ENCODE measurements at regions of chrX and their contacts with region 1.

Region 1: GRCh38 chrX:75603833-75604232 is 81.0 kb upstream of the ZDHHC15 start:
- DNase-seq: peak; percentile 7
- ATAC-seq: no peak
- H3K4me3 ChIP-seq: no peak overlapping the region
- H3K27ac ChIP-seq: no peak overlapping the region
- H3K4me1 ChIP-seq: no peaks in the 10 kb centered on the region
- H3K27me3 ChIP-seq: no peaks in the 10 kb centered on the region
- CTCF ChIP-seq: peak; percentile 36
- EP300 ChIP-seq: no peak
- POLR2A ChIP-seq: no peak
- RAD21 ChIP-seq: no peak

Region 2: GRCh38 chrX:74492720-74493201 is 1111.1 kb before region 1 on chrX:
- CTCF ChIA-PET with region 1: no interaction called
- POLR2A ChIA-PET with region 1: no interaction called
- in situ Hi-C with region 1: no loop called
- intact Hi-C with region 1: loop called (anchors 5 kb)
- DNase-seq: no peak
- ATAC-seq: peak; percentile 75
- H3K4me3 ChIP-seq: no peak overlapping the region
- H3K27ac ChIP-seq: no peak overlapping the region
- H3K4me1 ChIP-seq: no peaks in the 10 kb centered on the region
- H3K27me3 ChIP-seq: no peaks in the 10 kb centered on the region
- CTCF ChIP-seq: peak; percentile 34
- EP300 ChIP-seq: no peak
- POLR2A ChIP-seq: no peak
- RAD21 ChIP-seq: no peak

Region 3: DNA sequence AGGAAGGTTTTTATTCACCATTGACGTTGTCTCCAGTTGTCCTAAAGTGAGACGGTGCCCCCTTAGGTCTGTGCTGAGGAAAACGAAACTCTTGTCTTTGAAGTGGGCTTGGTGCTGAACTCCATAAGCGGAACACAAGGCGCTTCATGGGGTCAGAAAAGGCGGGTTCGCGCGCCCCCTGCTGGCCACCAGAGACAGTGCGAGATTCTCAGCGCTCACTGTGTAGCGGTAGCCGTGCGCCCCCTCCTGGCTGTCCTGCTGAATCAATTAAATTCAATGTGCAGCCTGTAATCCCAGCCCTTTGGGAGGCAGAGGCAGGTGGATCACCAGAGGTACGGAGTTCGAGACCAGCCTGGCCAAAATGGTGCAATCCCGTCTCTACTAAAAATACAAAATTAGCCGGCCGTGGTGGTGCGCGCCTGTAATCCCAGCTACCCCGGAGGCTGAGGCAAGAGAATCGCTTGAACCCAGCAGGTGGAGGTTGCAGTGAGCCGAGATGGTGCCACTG is 1053.5 kb before region 1 on chrX:
- CTCF ChIA-PET with region 1: no interaction called
- POLR2A ChIA-PET with region 1: no interaction called
- in situ Hi-C with region 1: no loop called
- intact Hi-C with region 1: loop called (anchors 5 kb)
- DNase-seq: peak; percentile 53
- ATAC-seq: peak; percentile 92
- H3K4me3 ChIP-seq: no peak overlapping the region
- H3K27ac ChIP-seq: no peak overlapping the region
- H3K4me1 ChIP-seq: no peaks in the 10 kb centered on the region
- H3K27me3 ChIP-seq: no peaks in the 10 kb centered on the region
- CTCF ChIP-seq: peak; percentile 97
- EP300 ChIP-seq: no peak
- POLR2A ChIP-seq: no peak
- RAD21 ChIP-seq: peak; percentile 79

Region 4: DNA sequence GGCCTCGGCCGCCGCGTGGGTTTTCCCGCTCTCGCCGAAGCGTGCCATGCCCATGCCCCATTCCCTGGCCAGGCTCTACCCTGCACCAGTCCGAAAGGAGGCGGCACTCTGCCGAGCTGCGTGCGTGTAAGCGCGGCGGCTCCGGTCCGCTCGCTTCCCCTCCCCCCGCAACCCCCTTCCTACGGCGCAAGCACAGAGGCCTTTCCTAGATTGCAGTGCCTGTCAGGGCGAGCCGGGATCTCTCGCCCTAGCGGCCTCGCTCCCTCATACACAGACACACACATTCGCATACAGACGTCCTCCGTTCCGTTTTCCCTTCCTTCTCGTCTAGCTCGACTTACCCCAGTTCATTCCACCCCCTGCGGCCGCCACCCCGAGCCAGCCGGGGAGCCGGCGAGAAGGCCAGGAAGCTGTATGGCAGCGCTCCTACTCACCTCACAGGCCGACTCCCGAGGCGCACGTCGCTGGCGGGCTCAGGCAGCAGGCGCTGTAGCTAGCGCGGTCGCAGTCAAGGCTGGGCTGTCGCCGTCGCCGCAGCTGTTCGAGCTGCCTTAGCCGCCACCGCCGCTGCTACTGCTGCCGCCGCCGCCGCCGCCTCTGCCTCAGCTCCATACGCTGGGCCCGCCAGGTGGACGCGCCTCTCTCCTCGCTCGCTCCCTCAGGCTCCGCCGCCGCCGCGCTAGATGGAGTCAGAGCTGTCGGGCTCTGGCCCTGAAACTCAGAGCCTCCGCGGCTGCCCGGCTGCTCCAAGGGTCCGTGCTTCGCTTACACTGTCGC is 679.2 kb before region 1 on chrX:
- CTCF ChIA-PET with region 1: no interaction called
- POLR2A ChIA-PET with region 1: no interaction called
- in situ Hi-C with region 1: no loop called
- intact Hi-C with region 1: loop called (anchors 10 kb)
- DNase-seq: no peak
- ATAC-seq: peak; percentile 93
- H3K4me3 ChIP-seq: peak overlapping the region; percentile 26 to 60 (median 41); a peak in 5 of 6 replicates
- H3K27ac ChIP-seq: no peak overlapping the region
- H3K4me1 ChIP-seq: no peaks in the 10 kb centered on the region
- H3K27me3 ChIP-seq: no peaks in the 10 kb centered on the region
- CTCF ChIP-seq: no peak
- EP300 ChIP-seq: no peak
- POLR2A ChIP-seq: no peak
- RAD21 ChIP-seq: no peak

Region 5: GRCh38 chrX:75038925-75039324 is 564.9 kb before region 1 on chrX:
- CTCF ChIA-PET with region 1: no interaction called
- POLR2A ChIA-PET with region 1: no interaction called
- in situ Hi-C with region 1: loop called (anchors 25 kb)
- intact Hi-C with region 1: loop called (anchors 5 kb)
- DNase-seq: peak; percentile 10
- ATAC-seq: peak; percentile 71
- H3K4me3 ChIP-seq: no peak overlapping the region
- H3K27ac ChIP-seq: no peak overlapping the region
- H3K4me1 ChIP-seq: no peaks in the 10 kb centered on the region
- H3K27me3 ChIP-seq: no peaks in the 10 kb centered on the region
- CTCF ChIP-seq: peak; percentile 66
- EP300 ChIP-seq: no peak
- POLR2A ChIP-seq: no peak
- RAD21 ChIP-seq: no peak

Region 6: DNA sequence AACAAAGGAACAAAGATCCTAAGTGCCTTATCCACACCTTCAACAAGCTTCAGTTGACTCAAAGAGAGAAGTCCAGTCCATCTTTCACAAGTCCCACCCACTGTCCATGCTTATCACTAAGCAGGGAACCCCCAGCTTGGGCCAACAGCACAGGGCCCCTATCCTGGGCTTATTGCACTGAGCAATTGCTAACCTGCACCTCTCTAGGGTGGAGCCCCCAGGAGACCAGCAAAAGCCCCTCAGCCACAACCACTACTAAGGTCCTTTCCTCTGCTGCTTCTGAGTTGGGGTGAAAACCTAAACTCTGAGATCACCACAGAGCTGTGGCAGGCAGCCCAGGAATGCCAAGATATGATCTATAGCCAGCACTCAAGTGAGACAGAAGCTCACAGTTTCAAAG is 472.3 kb after region 1 on chrX:
- CTCF ChIA-PET with region 1: no interaction called
- POLR2A ChIA-PET with region 1: no interaction called
- in situ Hi-C with region 1: no loop called
- intact Hi-C with region 1: no loop called
- DNase-seq: no peak
- ATAC-seq: no peak
- H3K4me3 ChIP-seq: no peak overlapping the region
- H3K27ac ChIP-seq: no peak overlapping the region
- H3K4me1 ChIP-seq: no peaks in the 10 kb centered on the region
- H3K27me3 ChIP-seq: no peaks in the 10 kb centered on the region
- CTCF ChIP-seq: no peak
- EP300 ChIP-seq: no peak
- POLR2A ChIP-seq: no peak
- RAD21 ChIP-seq: no peak

Measured in HepG2 (cell line).